ENCODE measurements at regions of chr3 and their contacts with region 1.

Region 1: DNA sequence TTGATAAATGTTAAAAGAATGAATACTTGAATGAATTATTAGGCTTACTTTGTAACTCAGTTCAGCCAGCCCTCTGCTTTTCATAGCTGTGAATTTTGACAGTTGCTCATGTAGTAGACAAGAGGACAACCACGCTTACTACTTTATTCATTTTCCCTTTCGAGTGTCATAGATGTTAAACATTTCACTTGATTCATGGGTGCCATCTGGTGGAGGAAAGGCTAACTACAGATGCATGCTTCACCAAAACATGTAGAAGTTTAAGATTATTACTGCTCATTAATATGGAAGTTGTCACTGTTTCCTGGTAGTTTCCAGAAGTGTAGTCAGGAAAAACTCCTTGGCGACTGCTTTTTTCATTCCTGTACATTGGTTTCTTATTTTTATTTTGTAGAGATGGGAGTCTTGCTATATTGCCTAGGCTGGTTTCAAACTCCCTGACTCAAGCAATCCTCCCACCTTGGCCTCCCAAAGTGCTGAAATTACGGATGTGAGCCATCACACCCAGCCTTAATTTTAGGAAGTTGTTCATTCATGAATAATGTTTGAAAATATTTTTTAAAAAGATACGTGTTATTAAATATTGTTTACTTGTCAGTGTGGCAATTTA is 163.2 kb downstream of the B3GALNT1 start:
- DNase-seq: peak; percentile 28 to 75 (median 36)
- ATAC-seq: peak; percentile 80
- H3K4me3 ChIP-seq: no peak overlapping the region
- H3K27ac ChIP-seq: no peak overlapping the region
- H3K4me1 ChIP-seq: no peaks in the 10 kb centered on the region
- H3K27me3 ChIP-seq: no peaks in the 10 kb centered on the region
- CTCF ChIP-seq: peak; percentile 53 to 79 (median 74); a peak in 5 of 6 replicates
- EP300 ChIP-seq: no peak
- POLR2A ChIP-seq: no peak
- RAD21 ChIP-seq: peak; percentile 78 to 85

Region 2: DNA sequence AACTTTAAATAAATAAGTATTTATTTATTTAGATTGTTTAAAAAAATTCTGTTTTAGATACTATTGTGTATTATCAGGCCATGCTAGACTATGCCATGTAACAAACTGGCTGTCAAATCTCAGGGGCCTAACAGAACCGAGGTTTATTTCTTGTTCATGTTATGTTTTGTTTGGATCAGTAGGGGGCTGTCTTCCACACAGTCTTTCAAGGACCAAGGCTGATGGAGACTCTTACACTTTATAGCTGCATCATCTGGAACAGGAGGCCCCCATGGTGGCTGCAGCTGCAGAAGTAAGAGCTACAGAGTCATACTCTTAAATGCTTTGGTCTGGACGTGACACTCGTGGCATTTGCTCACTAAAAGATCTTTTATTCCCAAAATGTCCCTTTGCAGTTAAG is 298.0 kb before region 1 on chr3:
- CTCF ChIA-PET with region 1: no interaction called
- POLR2A ChIA-PET with region 1: no interaction called
- in situ Hi-C with region 1: no loop called
- intact Hi-C with region 1: loop called (anchors 5 kb)
- DNase-seq: peak in 2 of 4 experiments; percentile 17 to 37
- ATAC-seq: peak; percentile 89
- H3K4me3 ChIP-seq: no peak overlapping the region
- H3K27ac ChIP-seq: no peak overlapping the region
- H3K4me1 ChIP-seq: no peaks in the 10 kb centered on the region
- H3K27me3 ChIP-seq: no peaks in the 10 kb centered on the region; a peak in 1 of 5 replicates
- CTCF ChIP-seq: peak; percentile 33 to 51 (median 39); a peak in 3 of 6 replicates
- EP300 ChIP-seq: no peak
- POLR2A ChIP-seq: no peak
- RAD21 ChIP-seq: peak; percentile 13 to 41; a peak in 2 of 4 replicates

Region 3: DNA sequence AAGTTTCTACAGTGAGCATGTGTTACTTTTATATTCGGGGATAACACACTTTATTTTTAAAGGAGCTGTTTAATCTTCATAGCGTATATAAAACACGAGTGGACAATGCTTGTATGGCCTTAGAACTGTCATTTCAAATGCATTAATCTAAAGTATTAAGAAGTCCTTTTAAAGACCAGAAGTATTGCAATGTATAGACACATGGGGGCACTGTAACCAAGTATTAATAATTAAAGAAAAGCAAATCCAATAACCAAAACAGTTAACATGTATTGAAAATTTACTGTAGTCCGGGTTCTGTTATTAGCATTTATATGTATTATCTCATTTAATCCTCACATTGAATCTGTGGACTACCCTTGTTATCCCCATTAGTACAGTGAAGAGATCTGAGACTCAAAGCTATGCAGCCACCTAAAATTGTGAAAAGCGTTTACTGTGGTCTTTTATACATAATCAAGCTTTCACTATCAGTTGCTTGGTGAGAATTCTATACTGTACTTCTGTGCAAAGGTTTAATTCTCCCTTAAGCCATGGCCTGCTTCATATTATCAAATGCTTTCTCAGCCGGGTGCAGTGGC is 254.9 kb before region 1 on chr3:
- CTCF ChIA-PET with region 1: interaction called, 8 read pairs
- POLR2A ChIA-PET with region 1: no interaction called
- in situ Hi-C with region 1: no loop called
- intact Hi-C with region 1: loop called (anchors 1 kb)
- DNase-seq: peak in 3 of 4 experiments; percentile 14 to 23 (median 15)
- ATAC-seq: peak; percentile 60; the same call in 2 of the 3 replicates
- H3K4me3 ChIP-seq: no peak overlapping the region
- H3K27ac ChIP-seq: no peak overlapping the region
- H3K4me1 ChIP-seq: no peaks in the 10 kb centered on the region
- H3K27me3 ChIP-seq: no peaks in the 10 kb centered on the region
- CTCF ChIP-seq: peak in 1 of 3 experiments; percentile 47; a peak in 2 of 6 replicates
- EP300 ChIP-seq: no peak
- POLR2A ChIP-seq: no peak
- RAD21 ChIP-seq: peak; percentile 32 to 51

Region 4: GRCh38 chr3:160707187-160707794 is 234.7 kb before region 1 on chr3:
- CTCF ChIA-PET with region 1: interaction called, 3 read pairs
- POLR2A ChIA-PET with region 1: no interaction called
- in situ Hi-C with region 1: no loop called
- intact Hi-C with region 1: loop called (anchors 1 kb)
- DNase-seq: peak in 2 of 4 experiments; percentile 27 to 47
- ATAC-seq: peak; percentile 73
- H3K4me3 ChIP-seq: no peak overlapping the region
- H3K27ac ChIP-seq: no peak overlapping the region
- H3K4me1 ChIP-seq: no peaks in the 10 kb centered on the region
- H3K27me3 ChIP-seq: no peaks in the 10 kb centered on the region
- CTCF ChIP-seq: peak; percentile 19 to 67 (median 44); a peak in 4 of 6 replicates
- EP300 ChIP-seq: no peak
- POLR2A ChIP-seq: no peak
- RAD21 ChIP-seq: peak; percentile 71 to 73

Region 5: DNA sequence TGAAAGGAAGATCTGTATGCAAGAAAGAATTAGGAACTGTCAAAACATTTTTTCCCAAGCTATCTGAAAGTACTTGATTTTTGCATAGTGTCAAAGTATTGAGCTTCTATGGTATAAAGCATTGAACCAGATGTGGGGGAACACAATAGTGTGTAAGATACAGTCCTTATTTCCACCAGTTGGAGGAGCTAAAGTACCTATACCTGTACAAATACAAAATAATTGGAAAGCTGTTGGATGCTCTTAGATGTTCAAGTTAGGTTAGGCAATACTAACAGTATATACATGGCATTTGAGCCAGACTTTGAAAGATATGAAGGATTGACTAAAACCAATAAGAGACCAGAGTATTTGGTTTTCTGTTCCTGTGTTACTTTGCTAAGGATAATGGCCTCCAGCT is 14.8 kb after region 1 on chr3:
- CTCF ChIA-PET with region 1: no interaction called
- POLR2A ChIA-PET with region 1: no interaction called
- in situ Hi-C with region 1: no loop called
- intact Hi-C with region 1: no loop called
- DNase-seq: peak in 1 of 4 experiments; percentile 4
- ATAC-seq: peak; percentile 67
- H3K4me3 ChIP-seq: no peak overlapping the region
- H3K27ac ChIP-seq: no peak overlapping the region
- H3K4me1 ChIP-seq: no peaks in the 10 kb centered on the region
- H3K27me3 ChIP-seq: no peaks in the 10 kb centered on the region
- CTCF ChIP-seq: peak in 1 of 3 experiments; percentile 45; a peak in 2 of 6 replicates
- EP300 ChIP-seq: no peak
- POLR2A ChIP-seq: no peak
- RAD21 ChIP-seq: peak; percentile 33 to 60

Region 6: DNA sequence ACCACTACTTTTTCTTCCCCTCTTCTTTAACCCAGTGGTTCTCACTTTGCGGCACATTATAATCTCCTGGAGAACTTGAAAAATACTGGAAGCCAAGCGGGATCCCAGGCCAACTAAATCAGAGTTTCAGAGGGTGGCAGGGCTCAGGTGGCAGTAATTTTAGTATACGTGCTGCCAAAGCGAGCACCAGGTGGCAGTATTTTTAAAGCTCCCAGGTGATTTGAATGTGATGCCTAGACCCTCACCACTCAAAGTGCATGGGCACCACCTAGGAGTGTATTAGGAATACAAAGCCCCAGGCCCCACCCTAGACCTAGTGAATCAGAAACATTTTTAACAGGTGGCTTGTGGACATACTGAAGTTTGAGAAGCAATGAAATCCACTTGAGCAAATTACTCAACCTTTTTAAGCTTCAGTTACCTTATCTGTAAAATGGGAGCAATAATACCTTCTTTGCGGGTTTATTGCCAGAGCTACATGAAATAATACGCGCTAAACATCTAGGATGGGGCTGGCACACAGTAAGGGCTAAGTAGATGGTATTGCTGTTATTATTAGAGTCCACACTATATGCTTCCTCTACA is 154.9 kb after region 1 on chr3:
- CTCF ChIA-PET with region 1: no interaction called
- POLR2A ChIA-PET with region 1: no interaction called
- in situ Hi-C with region 1: no loop called
- intact Hi-C with region 1: no loop called
- DNase-seq: peak in 1 of 4 experiments; percentile 9
- ATAC-seq: no peak; the same call in 2 of the 3 replicates
- H3K4me3 ChIP-seq: no peak overlapping the region
- H3K27ac ChIP-seq: no peak overlapping the region
- H3K4me1 ChIP-seq: no peaks in the 10 kb centered on the region
- H3K27me3 ChIP-seq: peaks cover 0 to 6% of the 10 kb centered on the region in 2 experiments; a peak in 1 of 5 replicates
- CTCF ChIP-seq: peak; percentile 18 to 29 (median 23); a peak in 2 of 6 replicates
- EP300 ChIP-seq: no peak
- POLR2A ChIP-seq: no peak
- RAD21 ChIP-seq: peak in 1 of 2 experiments; percentile 24; a peak in 1 of 4 replicates

Region 7: DNA sequence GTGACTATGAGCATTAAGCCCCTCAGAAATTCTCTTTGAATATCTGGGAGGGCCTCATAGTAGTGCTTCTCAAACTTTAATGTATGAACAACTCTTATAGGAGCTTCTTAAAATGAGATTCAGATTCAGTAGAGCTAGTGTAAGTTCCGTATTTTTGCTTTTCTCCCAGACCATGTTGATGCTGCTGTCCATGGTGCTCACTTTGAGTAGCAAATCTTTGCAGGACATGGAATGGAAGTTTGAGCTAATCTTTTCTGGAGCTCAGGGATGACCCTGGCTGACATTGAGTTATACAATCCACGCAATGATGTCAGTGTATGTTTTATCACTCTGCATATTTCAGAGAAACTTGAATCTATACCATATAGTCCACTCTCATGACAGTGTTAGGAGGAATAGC is 688.8 kb after region 1 on chr3:
- CTCF ChIA-PET with region 1: no interaction called
- POLR2A ChIA-PET with region 1: no interaction called
- in situ Hi-C with region 1: no loop called
- intact Hi-C with region 1: no loop called
- DNase-seq: no peak
- ATAC-seq: no peak
- H3K4me3 ChIP-seq: no peak overlapping the region
- H3K27ac ChIP-seq: no peak overlapping the region
- H3K4me1 ChIP-seq: no peaks in the 10 kb centered on the region
- H3K27me3 ChIP-seq: no peaks in the 10 kb centered on the region
- CTCF ChIP-seq: no peak
- EP300 ChIP-seq: no peak
- POLR2A ChIP-seq: no peak
- RAD21 ChIP-seq: no peak

Measured in K562 (cell line).